ENCODE measurements at regions of chr7 and their contacts with region 1.

Region 1: DNA sequence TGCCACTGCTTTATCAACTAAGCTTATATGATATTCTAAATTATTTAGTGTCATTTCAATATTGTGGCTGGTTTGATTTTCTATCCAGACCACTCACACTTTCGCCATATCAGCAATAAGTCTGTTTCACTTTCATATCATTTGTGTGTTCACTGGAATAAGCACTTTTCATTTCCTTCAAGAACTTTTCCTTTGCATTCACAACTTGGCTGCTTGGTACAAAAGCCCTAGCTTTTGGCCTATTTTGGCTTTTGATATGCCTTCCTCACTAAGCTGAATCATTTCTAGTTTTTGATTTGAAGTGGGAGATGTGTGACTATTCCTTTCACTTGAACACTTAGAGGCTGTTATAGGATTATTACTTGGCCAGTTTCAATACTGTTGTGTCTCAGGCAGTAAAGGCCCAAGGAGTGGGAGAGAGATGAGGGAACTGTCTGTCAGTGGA is 120.9 kb upstream of the NAMPT start:
- DNase-seq: peak; percentile 39
- ATAC-seq: peak; percentile 98
- H3K4me3 Mint-ChIP-seq: peak overlapping the region; percentile 8
- H3K27ac Mint-ChIP-seq: peak overlapping the region; percentile 55
- H3K4me1 Mint-ChIP-seq: peaks cover 38% of the 10 kb centered on the region
- H3K27me3 Mint-ChIP-seq: peaks cover 35% of the 10 kb centered on the region

Region 2: DNA sequence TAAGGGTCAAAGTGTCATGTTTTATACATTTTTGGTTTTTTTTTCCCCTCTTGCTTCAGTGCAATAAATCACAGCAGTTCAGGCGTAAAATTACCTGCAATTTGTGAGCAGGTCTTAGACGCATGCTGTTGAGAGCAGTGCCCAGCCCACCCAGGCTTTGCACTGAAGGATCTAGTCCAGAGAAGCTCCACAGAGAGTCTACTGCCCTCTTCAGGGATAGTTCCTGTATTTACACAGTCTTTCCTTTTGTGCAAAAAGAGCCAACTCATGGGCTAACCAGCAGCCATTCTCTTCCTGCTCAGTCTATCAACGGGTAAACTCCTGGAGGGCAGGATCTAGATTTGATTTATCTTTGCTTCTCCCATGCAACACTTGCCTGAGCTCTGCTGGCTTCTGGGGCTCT is 38.7 kb before region 1 on chr7:
- CTCF ChIA-PET with region 1: interaction called, 3 read pairs
- POLR2A ChIA-PET with region 1: no interaction called
- intact Hi-C with region 1: loop called (anchors 1 to 5 kb)
- DNase-seq: no peak
- ATAC-seq: peak; percentile 40
- H3K4me3 Mint-ChIP-seq: no peak overlapping the region
- H3K27ac Mint-ChIP-seq: no peak overlapping the region
- H3K4me1 Mint-ChIP-seq: peaks cover 38% of the 10 kb centered on the region
- H3K27me3 Mint-ChIP-seq: peaks cover 20% of the 10 kb centered on the region

Region 3: GRCh38 chr7:106419455-106420182 is 13.9 kb after region 1 on chr7:
- CTCF ChIA-PET with region 1: interaction called, 6 read pairs
- POLR2A ChIA-PET with region 1: interaction called, 4 read pairs
- intact Hi-C with region 1: loop called in 1 of 2 experiments (anchors 1 kb)
- DNase-seq: peak; percentile 67
- ATAC-seq: peak; percentile 74
- H3K4me3 Mint-ChIP-seq: peak overlapping the region; percentile 11
- H3K27ac Mint-ChIP-seq: peak overlapping the region; percentile 77
- H3K4me1 Mint-ChIP-seq: peaks cover 69% of the 10 kb centered on the region
- H3K27me3 Mint-ChIP-seq: peaks cover 9% of the 10 kb centered on the region

Region 4: GRCh38 chr7:106461993-106462859 is 56.5 kb after region 1 on chr7:
- CTCF ChIA-PET with region 1: interaction called, 5 read pairs
- POLR2A ChIA-PET with region 1: no interaction called
- intact Hi-C with region 1: loop called (anchors 1 to 2 kb)
- DNase-seq: no peak
- ATAC-seq: peak; percentile 69
- H3K4me3 Mint-ChIP-seq: peak overlapping the region; percentile 8
- H3K27ac Mint-ChIP-seq: peak overlapping the region; percentile 75
- H3K4me1 Mint-ChIP-seq: peaks cover 36% of the 10 kb centered on the region
- H3K27me3 Mint-ChIP-seq: no peaks in the 10 kb centered on the region

Region 5: DNA sequence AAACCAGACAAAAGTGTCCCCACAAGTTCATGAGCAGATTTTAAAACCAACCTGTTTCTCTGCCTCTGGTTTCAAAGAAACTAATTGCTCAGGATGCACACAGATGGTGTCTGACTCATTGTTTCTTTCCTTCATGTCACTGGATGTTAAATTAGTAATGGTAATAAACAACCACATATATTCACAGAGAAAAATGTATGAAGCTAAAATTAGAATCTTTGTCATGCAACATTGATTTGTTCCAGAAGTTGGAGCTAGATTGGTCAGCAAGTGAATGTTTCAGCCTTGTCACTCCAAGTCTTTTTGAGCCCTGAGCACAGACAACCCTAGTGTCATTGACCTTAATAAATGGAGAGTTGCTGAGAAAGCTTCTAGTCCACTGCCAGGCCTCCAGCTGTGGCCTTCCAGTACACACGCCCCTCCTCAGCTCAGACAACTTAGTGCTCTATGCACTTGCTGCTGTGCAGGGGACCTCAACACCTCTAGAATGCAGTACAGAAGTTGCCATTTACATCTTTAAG is 79.4 kb after region 1 on chr7:
- CTCF ChIA-PET with region 1: no interaction called
- POLR2A ChIA-PET with region 1: interaction called, 3 read pairs
- intact Hi-C with region 1: loop called (anchors 1 kb)
- DNase-seq: no peak
- ATAC-seq: peak; percentile 73
- H3K4me3 Mint-ChIP-seq: no peak overlapping the region
- H3K27ac Mint-ChIP-seq: peak overlapping the region; percentile 80
- H3K4me1 Mint-ChIP-seq: peaks cover 60% of the 10 kb centered on the region
- H3K27me3 Mint-ChIP-seq: peaks cover 10% of the 10 kb centered on the region